ENCODE measurements at regions of chr4 and their contacts with region 1.

Region 1: GRCh38 chr4:104915864-104916263 is 230.8 kb upstream of the TET2 start:
- DNase-seq: no peak
- ATAC-seq: no peak

Region 2: DNA sequence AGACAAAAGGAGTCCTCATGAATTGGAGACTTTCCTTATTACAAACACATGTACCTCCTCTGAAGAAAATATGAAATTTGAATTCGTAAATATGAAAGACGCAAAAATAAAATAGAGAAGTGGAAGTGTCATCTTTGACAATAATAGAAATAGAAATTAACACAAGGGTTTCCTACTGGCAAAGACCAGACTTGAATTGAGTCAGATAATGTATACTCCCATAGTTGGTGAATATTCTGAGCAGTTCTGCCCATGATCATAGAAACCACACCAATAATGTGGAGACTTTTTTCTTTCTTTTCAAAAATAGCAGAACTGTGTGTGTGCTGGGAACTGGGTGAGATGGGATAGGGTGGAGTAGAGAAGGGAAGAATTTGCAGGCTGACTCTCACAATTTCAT is 46.9 kb before region 1 on chr4:
- intact Hi-C with region 1: loop called (anchors 1 kb)
- DNase-seq: no peak
- ATAC-seq: no peak

Measured in sciatic nerve (tissue), 2 donors.